Tibial artery (tissue), 4 donors: ENCODE measurements at regions of chr22 and their contacts with region 1.

Region 1: DNA sequence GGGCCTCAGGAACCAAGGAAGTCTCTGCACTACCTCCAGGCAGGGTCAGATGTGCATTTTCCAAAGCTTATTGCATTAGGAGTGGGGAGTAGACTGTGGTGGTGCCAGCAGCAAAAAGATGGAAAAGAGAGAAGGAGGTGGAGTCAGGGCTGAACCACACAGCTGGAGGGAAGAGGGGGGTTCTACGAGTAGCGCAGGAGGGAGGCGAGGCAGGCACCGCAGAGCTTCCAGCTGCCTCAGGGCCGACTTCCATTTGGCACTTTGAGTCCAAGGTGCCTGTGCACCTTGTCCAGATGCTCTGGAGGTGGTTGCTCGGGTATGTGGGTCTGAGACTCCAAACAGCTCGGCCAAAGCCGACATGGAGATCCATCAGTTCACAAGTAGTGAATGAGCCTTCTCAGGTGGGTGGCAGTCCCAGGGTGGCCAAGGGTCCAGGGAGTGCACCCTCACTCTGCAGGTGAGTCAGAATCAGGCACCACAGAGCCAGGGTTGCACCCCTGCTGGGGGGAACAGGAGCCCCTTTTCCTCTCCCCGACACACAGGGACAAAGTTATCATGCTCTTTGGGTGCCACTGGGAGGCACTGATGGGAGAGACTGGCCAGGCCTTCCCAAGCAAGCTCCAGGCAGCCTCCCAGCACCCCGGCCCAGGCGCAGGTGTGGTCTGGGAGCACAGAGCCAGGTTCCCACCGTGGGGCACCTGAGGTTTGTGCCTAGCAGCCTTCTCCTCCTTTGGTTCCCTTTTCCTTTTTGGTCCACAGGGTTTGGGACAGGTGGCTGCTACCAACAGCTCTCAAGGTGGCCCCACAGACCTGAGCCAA is 30.2 kb downstream of the GGT5 start:
- DNase-seq: no peak
- H3K4me3 ChIP-seq: no peak overlapping the region
- H3K27ac ChIP-seq: no peak overlapping the region
- H3K4me1 ChIP-seq: no peaks in the 10 kb centered on the region
- H3K27me3 ChIP-seq: no peaks in the 10 kb centered on the region
- CTCF ChIP-seq: no peak

Region 2: GRCh38 chr22:22538226-22538989 is 1676.3 kb before region 1 on chr22:
- intact Hi-C with region 1: loop called (anchors 10 kb)
- DNase-seq: no peak
- H3K4me3 ChIP-seq: no peak overlapping the region
- H3K27ac ChIP-seq: no peak overlapping the region
- H3K4me1 ChIP-seq: no peaks in the 10 kb centered on the region
- H3K27me3 ChIP-seq: peaks cover 0 to 2% of the 10 kb centered on the region in 2 donors
- CTCF ChIP-seq: no peak